ENCODE measurements at regions of chr7 and their contacts with region 1.

Region 1: GRCh38 chr7:134910968-134911367 is 75.3 kb upstream of the AGBL3 start:
- DNase-seq: no peak
- ATAC-seq: no peak
- H3K4me3 ChIP-seq: no peak overlapping the region
- H3K4me3 Mint-ChIP-seq: no peak overlapping the region
- H3K27ac ChIP-seq: no peak overlapping the region
- H3K27ac Mint-ChIP-seq: no peak overlapping the region
- H3K4me1 ChIP-seq: no peaks in the 10 kb centered on the region
- H3K4me1 Mint-ChIP-seq: no peaks in the 10 kb centered on the region
- H3K27me3 ChIP-seq: no peaks in the 10 kb centered on the region
- H3K27me3 Mint-ChIP-seq: no peaks in the 10 kb centered on the region

Region 2: GRCh38 chr7:134813663-134814396 is 97.1 kb before region 1 on chr7:
- CTCF ChIA-PET with region 1: no interaction called
- POLR2A ChIA-PET with region 1: interaction called in 1 of 2 experiments, 13 read pairs
- DNase-seq: no peak
- ATAC-seq: no peak
- H3K4me3 ChIP-seq: no peak overlapping the region
- H3K4me3 Mint-ChIP-seq: no peak overlapping the region
- H3K27ac ChIP-seq: no peak overlapping the region
- H3K27ac Mint-ChIP-seq: no peak overlapping the region
- H3K4me1 ChIP-seq: no peaks in the 10 kb centered on the region
- H3K4me1 Mint-ChIP-seq: no peaks in the 10 kb centered on the region
- H3K27me3 ChIP-seq: peaks cover 0 to 2% of the 10 kb centered on the region in 2 experiments
- H3K27me3 Mint-ChIP-seq: peaks cover 0 to 4% of the 10 kb centered on the region in 2 donors

Region 3: GRCh38 chr7:134992626-134993179 is 81.7 kb after region 1 on chr7:
- CTCF ChIA-PET with region 1: no interaction called
- POLR2A ChIA-PET with region 1: no interaction called
- DNase-seq: peak in 11 of 35 experiments; percentile 1 to 32 (median 11)
- ATAC-seq: peak; percentile 48 to 67 (median 58)
- H3K4me3 ChIP-seq: no peak overlapping the region
- H3K4me3 Mint-ChIP-seq: peak overlapping the region in 2 of 3 donors; percentile 55 to 56
- H3K27ac ChIP-seq: peak overlapping the region; percentile 35
- H3K27ac Mint-ChIP-seq: peak overlapping the region; percentile 95 to 97
- H3K4me1 ChIP-seq: peaks cover 19 to 59% of the 10 kb centered on the region in 2 experiments
- H3K4me1 Mint-ChIP-seq: peaks cover 77 to 82% (median 80%) of the 10 kb centered on the region in 3 donors
- H3K27me3 ChIP-seq: no peaks in the 10 kb centered on the region
- H3K27me3 Mint-ChIP-seq: no peaks in the 10 kb centered on the region